HEK293 (cell line): ENCODE measurements at regions of chr17 and their contacts with region 1.

Region 1: DNA sequence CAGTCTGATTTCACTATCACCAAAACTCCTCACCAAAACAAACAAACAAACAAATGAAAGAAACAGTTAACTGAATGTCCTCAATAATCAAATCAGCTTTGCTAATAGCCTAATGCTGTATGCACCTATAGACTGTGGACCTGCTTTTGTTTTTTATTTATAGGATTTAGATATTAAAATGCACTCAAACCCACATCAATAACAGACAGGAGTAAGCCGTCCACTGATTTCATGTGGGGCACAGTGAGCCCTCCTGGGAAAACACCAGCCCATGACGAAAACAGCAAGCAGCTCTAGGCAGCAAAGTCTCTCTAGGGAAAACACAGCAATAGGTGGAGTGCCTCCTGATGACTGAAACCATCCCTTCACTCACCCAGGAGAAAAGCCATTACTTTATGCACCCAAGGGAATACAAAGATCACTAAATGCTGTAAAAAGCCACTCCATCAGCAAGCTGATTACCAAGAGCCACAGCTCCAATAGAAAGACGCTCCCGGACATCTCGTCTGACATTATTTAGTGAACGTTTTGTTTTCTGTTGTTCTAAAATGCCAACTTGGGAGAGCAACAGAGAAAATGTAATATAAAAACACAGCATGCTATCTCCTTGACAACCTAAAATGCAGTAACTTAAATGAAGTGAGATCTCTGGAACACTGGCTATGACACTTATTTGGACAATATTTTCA is 47.8 kb downstream of the ANKFY1 start:
- H3K4me3 ChIP-seq: no peak overlapping the region
- H3K27ac ChIP-seq: no peak overlapping the region
- H3K4me1 ChIP-seq: peaks cover 21% of the 10 kb centered on the region
- CTCF ChIP-seq: no peak

Region 2: GRCh38 chr17:4127555-4127954 is 88.5 kb before region 1 on chr17:
- CTCF ChIA-PET with region 1: no interaction called
- POLR2A ChIA-PET with region 1: no interaction called
- H3K4me3 ChIP-seq: no peak overlapping the region
- H3K27ac ChIP-seq: no peak overlapping the region
- H3K4me1 ChIP-seq: no peaks in the 10 kb centered on the region; the same call in 1 of the 2 replicates
- CTCF ChIP-seq: no peak

Region 3: GRCh38 chr17:4199818-4200402 is 16.1 kb before region 1 on chr17:
- CTCF ChIA-PET with region 1: interaction called, 48 read pairs
- POLR2A ChIA-PET with region 1: no interaction called
- H3K4me3 ChIP-seq: no peak overlapping the region
- H3K27ac ChIP-seq: no peak overlapping the region
- H3K4me1 ChIP-seq: no peaks in the 10 kb centered on the region
- CTCF ChIP-seq: peak; percentile 74

Region 4: DNA sequence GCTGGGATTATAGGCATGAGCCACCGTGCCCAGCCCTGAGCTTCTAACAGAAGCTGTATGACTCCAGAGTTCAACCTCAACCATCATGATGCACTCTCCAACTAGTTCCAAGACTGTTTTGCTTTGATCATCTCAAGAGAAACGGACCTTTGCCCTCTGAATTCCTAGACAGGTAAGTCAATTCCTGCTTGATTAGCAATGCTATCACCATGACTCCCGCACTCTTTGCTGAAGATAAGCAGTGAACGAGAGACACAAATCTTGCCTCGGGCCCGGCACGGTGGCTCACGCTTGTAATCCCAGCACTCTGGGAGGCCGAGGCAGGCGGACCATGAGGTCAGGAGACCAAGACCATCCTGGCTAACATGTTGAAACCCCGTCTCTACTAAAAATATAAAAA is 25.5 kb after region 1 on chr17:
- CTCF ChIA-PET with region 1: interaction called, 67 read pairs
- POLR2A ChIA-PET with region 1: interaction called, 5 read pairs
- H3K4me3 ChIP-seq: no peak overlapping the region
- H3K27ac ChIP-seq: no peak overlapping the region
- H3K4me1 ChIP-seq: peaks cover under 1% of the 10 kb centered on the region; the same call in 1 of the 2 replicates
- CTCF ChIP-seq: no peak

Region 5: DNA sequence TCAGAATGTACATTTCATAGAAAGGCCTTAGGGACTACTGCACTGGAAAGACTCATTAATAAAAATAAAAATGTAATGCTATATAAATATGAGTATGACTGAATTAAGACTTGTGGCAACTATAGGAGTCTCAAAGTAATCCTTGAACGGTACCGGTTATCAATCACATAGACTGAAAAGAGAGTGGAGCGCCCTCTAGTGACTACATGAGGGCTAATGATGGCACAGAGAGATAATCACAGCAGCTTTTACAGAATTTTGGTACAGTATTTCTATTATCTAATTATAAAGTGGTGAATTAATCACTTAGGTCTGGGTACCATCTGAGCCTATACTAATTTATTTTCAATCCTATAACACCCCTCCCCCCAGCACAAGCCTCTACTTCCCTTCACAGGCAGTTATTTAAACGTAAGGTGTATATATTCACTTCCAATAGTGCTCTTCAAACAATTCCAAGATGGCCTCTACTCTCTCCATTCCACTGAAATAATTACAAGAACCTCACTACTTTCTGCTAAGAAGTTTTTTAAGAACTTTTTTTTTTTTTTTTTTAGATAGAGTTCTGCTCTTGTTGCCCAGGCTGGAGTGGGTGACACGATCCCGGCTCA is 88.5 kb after region 1 on chr17:
- CTCF ChIA-PET with region 1: interaction called, 21 read pairs
- POLR2A ChIA-PET with region 1: no interaction called
- H3K4me3 ChIP-seq: no peak overlapping the region
- H3K27ac ChIP-seq: no peak overlapping the region
- H3K4me1 ChIP-seq: peaks cover 5% of the 10 kb centered on the region; the same call in 1 of the 2 replicates
- CTCF ChIP-seq: 0 out of 2 replicates have a peak, but pooled peaks have one; percentile 16

Region 6: DNA sequence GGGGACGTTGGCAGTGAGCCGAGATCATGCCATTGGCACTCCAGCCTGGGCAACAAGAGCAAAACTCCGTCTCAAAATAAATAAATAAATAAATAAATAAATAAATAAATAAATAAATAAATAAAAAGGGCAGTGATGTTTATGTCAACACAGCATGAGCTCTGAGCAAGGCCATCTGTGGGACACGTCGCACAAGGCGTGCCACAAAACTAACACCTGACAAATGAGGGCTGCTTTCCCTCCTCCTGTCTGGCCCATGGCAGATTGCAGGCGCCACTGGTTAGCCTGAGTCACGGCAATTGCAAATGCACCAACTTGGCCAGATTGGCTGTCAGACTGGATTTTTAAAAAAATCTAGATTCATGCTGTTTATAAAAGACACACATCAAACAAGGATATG is 191.8 kb after region 1 on chr17:
- CTCF ChIA-PET with region 1: interaction called, 63 read pairs
- POLR2A ChIA-PET with region 1: interaction called, 3 read pairs
- H3K4me3 ChIP-seq: no peak overlapping the region
- H3K27ac ChIP-seq: no peak overlapping the region
- H3K4me1 ChIP-seq: no peaks in the 10 kb centered on the region
- CTCF ChIP-seq: no peak